Activated CD8-positive, alpha-beta T cell treated with anti-CD3 and anti-CD28 coated beads, Interleukin-2, amount 10 ng/mL, durations not matched to agents 7 days and 5 days (primary cell): ENCODE measurements at regions of chr10 and their contacts with region 1.

Region 1: DNA sequence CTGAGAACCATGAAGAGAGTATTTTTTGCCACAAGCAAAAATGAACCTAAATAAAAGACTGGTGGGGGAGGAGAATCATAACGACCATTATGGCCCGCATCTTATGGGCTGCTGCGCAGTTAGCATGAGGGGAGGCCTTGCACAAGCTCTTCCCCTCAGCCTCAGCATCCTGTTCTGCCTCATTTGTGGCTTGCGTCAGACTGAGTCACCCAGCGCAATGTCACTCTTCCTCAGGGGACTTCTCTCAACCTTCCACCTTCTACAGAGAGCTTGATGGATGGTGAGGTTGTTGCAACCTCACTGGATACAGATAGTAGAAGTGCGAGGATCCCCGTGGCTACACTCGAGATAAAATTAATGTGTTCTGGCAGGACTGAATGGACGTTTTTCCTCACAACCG is 16.8 kb upstream of the GPR15LG start:
- DNase-seq: peak; percentile 75
- ATAC-seq: peak; percentile 96
- H3K4me3 Mint-ChIP-seq: no peak overlapping the region
- H3K27ac Mint-ChIP-seq: peak overlapping the region; percentile 77
- H3K4me1 Mint-ChIP-seq: peaks cover 26% of the 10 kb centered on the region
- H3K27me3 Mint-ChIP-seq: peaks cover 3% of the 10 kb centered on the region

Region 2: DNA sequence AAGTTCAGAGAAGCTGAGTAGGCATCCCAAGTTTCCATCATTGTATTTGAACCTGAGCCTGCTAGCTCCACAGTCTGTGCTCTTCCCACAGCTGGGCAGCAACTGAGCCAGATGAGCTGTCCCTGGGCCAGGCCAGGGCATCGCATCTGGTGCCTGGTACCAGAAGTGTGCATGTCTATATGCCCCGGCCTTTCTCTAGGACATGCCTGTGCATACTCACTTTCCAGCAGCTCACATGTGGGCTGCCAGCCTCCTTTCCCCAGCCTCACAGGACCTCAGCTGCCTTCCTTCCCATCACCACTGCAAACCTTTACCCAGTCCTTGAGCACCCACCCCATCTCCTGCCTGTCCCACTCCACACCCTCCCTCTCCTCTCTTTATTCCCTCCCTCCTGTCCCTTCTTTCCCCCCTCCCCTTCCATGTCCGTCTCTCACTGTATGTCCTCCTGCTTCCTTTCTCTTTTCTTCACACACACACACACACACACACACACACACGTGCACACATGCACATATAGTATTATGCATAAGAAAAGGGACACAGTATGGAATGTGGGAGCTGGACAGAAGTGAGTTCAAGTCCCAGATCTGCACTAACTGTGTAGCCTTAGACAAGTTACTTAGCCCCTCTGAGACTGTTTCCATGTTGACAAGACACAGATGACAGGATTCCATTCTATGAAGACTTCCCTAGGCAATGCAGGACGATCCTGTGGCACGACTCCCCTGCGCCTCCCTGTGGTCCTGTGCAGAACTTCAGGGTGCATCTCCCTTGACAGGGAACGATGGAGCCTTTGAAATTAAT is 48.5 kb after region 1 on chr10:
- CTCF ChIA-PET with region 1: interaction called, 14 read pairs
- POLR2A ChIA-PET with region 1: no interaction called
- DNase-seq: peak; percentile 78
- ATAC-seq: peak; percentile 83
- H3K4me3 Mint-ChIP-seq: no peak overlapping the region
- H3K27ac Mint-ChIP-seq: no peak overlapping the region
- H3K4me1 Mint-ChIP-seq: no peaks in the 10 kb centered on the region
- H3K27me3 Mint-ChIP-seq: peaks cover 11% of the 10 kb centered on the region